Activated naive CD8-positive, alpha-beta T cell treated with anti-CD3 and anti-CD28 coated beads, Interleukin-2, amount 10 ng/mL, durations not matched to agents 7 days and 5 days (primary cell): ENCODE measurements at regions of chr16 and their contacts with region 1.

Region 1: DNA sequence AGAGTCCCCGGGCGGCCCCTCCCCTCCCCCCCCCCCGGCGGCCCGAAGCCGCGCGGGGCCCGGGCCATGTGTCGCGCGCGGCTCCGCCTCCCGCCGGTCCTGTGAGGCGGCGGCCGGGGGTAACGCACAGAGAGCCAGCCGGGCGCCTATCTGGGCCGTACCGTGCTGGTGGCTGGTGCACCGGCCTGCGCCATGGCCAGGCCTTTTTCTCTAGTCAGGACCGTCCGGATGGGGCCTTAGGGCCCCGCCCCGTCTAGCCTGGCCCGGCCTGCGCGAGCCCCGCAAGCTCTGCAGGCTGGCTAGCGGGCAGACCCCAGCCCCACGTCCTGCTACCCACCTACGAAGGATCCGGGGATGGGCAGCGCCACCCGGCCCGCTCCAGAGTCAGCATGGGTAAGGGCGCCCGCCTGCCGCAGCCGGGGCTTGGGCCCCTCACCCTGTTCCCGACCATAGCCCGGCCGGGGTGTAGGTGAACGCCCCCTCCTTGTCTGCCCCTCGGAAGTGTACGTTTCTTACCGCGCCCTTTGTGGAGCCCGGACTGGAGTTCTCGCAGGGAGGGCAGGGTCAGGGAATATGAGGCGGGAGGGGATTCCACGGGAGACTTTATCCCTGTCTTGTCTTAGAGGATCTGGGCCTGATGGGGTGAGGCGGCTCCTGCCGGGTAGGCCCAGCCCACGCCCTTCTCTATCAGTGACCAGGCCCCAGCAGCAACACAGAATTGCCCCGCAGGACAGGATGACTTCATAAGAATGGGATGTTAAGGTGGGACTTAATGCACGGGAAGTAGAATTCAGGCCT is at the start of gene CENPT:
- DNase-seq: no peak
- ATAC-seq: peak; percentile 43
- H3K4me3 Mint-ChIP-seq: peak within 1 kb of the TSS; percentile 94
- H3K27ac Mint-ChIP-seq: peak within 1 kb of the TSS; percentile 90
- H3K4me1 Mint-ChIP-seq: peaks cover 35% of the 10 kb centered on the region
- H3K27me3 Mint-ChIP-seq: no peaks in the 10 kb centered on the region
- total RNA-seq, gene CENPT: 84.0 to 90.7 TPM

Region 2: DNA sequence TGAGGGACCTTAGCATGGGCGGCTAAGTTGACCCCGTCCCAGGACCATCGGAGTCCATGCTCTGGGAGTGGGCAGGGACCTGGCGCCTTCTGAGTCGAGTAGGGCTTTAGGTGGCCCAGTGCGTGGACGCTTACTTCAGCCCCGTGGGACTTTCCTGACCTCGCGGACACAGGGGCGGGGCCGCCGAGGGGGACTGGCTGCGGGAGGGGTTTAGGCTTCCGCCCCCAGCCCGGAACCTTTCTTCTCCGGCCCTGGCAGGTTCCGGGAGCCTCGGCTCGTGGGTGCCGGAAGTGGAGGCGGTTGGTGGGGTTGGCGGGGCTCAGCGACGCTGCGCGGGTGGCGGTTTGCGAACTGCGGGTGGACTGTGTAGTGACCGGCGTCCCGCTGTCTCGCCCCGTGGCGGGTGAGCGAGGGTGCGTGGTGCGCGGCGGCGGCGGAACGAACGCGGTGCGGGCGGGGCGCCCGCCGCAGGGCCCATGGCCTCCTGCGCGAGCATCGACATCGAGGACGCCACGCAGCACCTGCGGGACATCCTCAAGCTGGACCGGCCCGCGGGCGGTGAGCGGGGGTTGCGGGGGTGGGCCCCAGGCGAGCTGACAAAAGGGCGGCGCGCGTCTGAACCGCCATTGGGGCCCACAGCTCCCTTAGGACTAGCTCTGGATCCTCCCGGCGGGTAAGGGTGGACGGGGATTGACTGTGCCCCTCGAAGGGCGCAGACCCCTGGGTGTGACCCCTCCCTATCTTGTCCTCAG is 25.7 kb after region 1 on chr16 and contains the start of gene EDC4:
- POLR2A ChIA-PET with region 1: interaction called, 10 read pairs
- DNase-seq: peak; percentile 96
- ATAC-seq: peak; percentile 87
- H3K4me3 Mint-ChIP-seq: peak within 1 kb of the TSS; percentile 89
- H3K27ac Mint-ChIP-seq: peak within 1 kb of the TSS; percentile 92
- H3K4me1 Mint-ChIP-seq: peaks cover 24% of the 10 kb centered on the region
- H3K27me3 Mint-ChIP-seq: no peaks in the 10 kb centered on the region
- total RNA-seq, gene EDC4: 119 to 130 TPM

Region 3: DNA sequence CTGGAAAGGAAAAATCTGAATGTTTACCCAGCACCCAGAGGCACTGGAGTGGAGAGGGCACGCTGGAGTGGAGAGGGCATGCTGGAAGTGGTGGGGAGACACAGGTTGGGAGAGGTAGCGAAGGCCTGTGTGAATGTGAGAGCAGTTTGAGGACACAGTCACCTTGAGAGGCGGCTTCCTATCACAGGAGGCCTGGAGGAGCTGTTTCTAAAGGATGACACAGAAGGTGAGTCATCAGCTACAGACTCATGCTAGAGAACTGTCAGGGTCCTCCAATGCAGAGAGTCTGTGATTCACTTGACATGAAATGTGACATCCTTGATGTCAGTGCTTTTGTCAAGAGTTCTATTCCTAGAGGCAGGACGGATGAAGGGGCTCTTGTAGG is 70.6 kb after region 1 on chr16:
- POLR2A ChIA-PET with region 1: no interaction called
- DNase-seq: no peak
- ATAC-seq: peak; percentile 82
- H3K4me3 Mint-ChIP-seq: no peak overlapping the region
- H3K27ac Mint-ChIP-seq: peak overlapping the region; percentile 78
- H3K4me1 Mint-ChIP-seq: peaks cover 17% of the 10 kb centered on the region
- H3K27me3 Mint-ChIP-seq: no peaks in the 10 kb centered on the region